Activated CD4-positive, alpha-beta memory T cell treated with anti-CD3 and anti-CD28 coated beads for 36 hours (primary cell): ENCODE measurements at regions of chr6 and their contacts with region 1.

Region 1: DNA sequence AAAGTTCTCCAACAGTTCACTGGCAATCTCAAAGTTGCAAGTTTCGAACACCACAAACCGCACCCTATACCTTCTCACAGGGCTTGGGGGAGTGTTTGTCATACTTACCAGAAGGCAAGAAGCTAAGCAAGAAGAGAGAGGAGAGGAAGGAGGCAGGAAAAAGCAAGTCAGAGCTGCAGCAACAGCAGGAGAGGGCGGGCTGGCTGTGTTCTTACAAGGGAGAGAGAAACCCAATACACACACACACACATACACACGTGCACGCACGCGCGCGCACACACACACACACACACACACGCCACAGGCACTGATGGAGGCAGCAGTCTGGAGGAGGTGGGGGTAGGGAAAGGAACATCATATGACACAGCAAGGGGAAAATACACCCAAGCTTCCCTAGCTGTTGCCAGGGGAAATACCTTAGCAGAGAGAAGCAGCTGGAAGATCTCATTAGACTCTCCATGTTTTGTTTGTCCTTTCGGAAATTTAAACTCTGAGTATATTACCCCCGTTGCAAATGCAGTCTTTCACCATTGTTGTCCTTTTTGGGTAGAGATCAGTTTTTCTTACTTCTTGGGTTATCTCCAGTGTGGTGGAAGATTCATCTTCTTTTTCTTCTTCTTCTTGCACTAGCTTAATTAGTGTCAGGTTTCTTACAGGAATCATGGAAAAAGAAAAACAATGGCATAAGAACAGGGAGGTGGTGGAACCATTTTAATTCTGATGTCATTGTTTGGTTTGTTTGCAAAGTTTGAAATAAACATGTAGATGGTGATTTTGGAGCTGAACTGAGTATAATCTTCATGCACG is at the start of gene TXLNB:
- DNase-seq: peak; percentile 92
- H3K4me3 Mint-ChIP-seq: peak within 1 kb of the TSS; percentile 72
- H3K27ac Mint-ChIP-seq: peak within 1 kb of the TSS; percentile 95
- H3K4me1 Mint-ChIP-seq: peaks cover 56% of the 10 kb centered on the region
- H3K27me3 Mint-ChIP-seq: no peaks in the 10 kb centered on the region
- total RNA-seq, gene TXLNB: 0.17 to 0.31 TPM

Region 2: DNA sequence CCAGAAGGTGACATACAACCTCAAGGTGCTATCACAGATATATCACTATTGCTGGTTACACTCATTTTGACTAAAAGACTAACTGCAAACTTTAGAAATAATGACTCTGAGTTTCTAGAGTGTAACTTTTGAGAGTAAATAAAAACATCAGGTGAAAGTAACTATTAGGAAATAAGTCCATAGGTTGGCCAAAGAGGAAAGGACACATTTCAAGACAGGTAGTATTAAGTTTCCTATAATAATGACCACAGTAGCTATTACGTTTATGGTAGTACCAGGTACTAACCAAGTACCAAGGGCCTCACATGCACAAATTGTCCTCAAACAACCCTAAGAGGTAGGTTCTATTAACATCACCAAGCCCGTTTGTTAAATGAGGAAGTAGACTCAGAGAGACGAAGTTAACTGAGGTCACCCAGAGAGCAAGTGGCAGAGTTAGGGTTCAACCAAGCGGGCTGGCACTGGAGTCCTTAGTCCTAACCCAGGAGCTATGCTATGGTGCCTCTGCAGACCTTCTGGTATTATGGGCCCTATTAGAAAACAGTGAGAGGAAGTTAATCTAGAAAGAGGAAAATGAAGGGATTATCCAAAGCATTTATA is 851.2 kb before region 1 on chr6:
- CTCF ChIA-PET with region 1: no interaction called
- POLR2A ChIA-PET with region 1: no interaction called
- intact Hi-C with region 1: no loop called
- DNase-seq: no peak
- H3K4me3 Mint-ChIP-seq: no peak overlapping the region
- H3K27ac Mint-ChIP-seq: no peak overlapping the region
- H3K4me1 Mint-ChIP-seq: no peaks in the 10 kb centered on the region
- H3K27me3 Mint-ChIP-seq: no peaks in the 10 kb centered on the region

Region 3: DNA sequence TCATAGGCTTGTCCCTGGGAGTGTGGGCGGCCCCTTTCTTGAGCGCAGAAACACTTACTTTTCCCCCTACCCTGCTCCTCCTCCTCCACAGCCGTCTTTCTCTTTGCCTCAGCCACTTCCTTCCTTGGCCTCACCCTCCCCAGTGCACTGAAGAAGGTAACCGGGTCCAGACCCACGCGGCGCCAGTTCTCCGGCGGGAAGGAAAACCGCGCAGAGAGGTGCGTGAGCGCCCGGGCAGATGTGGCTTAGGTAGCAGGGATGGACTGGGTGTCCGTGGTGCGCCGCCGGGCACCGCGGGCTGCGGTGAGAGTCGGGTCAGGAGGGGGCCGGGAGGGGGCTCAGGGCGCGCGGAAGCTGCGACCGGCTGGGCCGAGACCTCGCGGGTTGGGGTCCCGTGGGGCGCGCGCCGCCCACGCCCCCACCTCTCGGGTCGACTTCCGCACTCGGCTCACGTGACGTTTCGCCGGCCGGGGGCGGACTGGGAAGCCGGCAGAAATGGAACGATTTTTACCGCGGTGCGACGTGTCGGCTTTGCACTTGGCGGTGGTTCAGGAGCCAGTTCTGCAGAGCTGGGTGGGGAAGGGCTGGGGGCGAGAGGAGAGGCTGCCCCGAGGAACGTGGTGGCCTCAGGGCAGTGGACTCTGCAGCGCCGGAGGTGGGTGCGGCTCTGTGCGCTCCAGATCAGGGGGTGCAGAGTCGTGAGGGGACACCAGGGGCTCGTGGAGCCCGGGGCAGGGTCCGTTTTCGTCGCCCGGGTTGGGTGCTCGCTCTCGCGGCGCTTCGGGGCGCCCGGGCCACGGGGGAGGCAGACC is 263.2 kb before region 1 on chr6 and contains the start of gene ABRACL:
- CTCF ChIA-PET with region 1: interaction called, 3 read pairs
- POLR2A ChIA-PET with region 1: interaction called, 3 read pairs
- intact Hi-C with region 1: loop called (anchors 2 kb)
- DNase-seq: peak; percentile 91
- H3K4me3 Mint-ChIP-seq: no peak within 1 kb of the TSS
- H3K27ac Mint-ChIP-seq: no peak within 1 kb of the TSS
- H3K4me1 Mint-ChIP-seq: peaks cover 20% of the 10 kb centered on the region
- H3K27me3 Mint-ChIP-seq: no peaks in the 10 kb centered on the region
- total RNA-seq, gene ABRACL: 179 to 182 TPM

Region 4: DNA sequence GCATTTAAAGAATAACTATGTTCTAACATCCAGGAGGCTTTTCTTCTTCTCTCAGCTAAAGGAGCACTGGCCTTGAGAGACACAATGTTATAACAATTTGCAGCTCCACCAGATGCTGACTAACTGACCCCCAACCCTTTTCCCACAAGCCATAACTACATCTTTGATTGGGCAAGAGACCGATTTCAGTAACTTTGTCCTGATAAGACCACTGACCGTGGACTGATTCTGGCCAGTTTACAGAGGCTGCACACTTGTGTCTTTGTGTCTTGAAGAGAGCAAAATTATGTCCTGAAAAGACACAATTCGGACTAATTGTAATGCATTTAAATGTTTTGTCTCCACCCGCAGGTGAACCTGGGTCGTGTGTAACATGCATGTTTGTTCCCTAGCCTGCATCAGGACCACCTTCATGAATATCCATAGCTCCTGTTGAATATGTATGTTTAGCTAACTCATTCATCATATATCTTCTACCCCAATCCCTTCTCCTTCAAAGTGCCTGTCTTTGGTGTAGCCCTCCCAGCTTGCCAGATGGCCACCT is 241.2 kb before region 1 on chr6:
- CTCF ChIA-PET with region 1: no interaction called
- POLR2A ChIA-PET with region 1: no interaction called
- intact Hi-C with region 1: no loop called
- DNase-seq: no peak
- H3K4me3 Mint-ChIP-seq: no peak overlapping the region
- H3K27ac Mint-ChIP-seq: no peak overlapping the region
- H3K4me1 Mint-ChIP-seq: peaks cover 4% of the 10 kb centered on the region
- H3K27me3 Mint-ChIP-seq: no peaks in the 10 kb centered on the region

Region 5: GRCh38 chr6:139161817-139162284 is 130.2 kb before region 1 on chr6:
- CTCF ChIA-PET with region 1: no interaction called
- POLR2A ChIA-PET with region 1: no interaction called
- intact Hi-C with region 1: loop called (anchors 1 kb)
- DNase-seq: peak; percentile 88
- H3K4me3 Mint-ChIP-seq: peak overlapping the region; percentile 61
- H3K27ac Mint-ChIP-seq: peak overlapping the region; percentile 96
- H3K4me1 Mint-ChIP-seq: peaks cover 92% of the 10 kb centered on the region
- H3K27me3 Mint-ChIP-seq: no peaks in the 10 kb centered on the region

Region 6: GRCh38 chr6:139250296-139251044 is 41.5 kb before region 1 on chr6:
- CTCF ChIA-PET with region 1: interaction called, 6 read pairs
- POLR2A ChIA-PET with region 1: interaction called, 3 read pairs
- intact Hi-C with region 1: loop called (anchors 1 kb)
- DNase-seq: peak; percentile 75
- H3K4me3 Mint-ChIP-seq: no peak overlapping the region
- H3K27ac Mint-ChIP-seq: peak overlapping the region; percentile 73
- H3K4me1 Mint-ChIP-seq: peaks cover 49% of the 10 kb centered on the region
- H3K27me3 Mint-ChIP-seq: no peaks in the 10 kb centered on the region

Region 7: GRCh38 chr6:139278190-139278589 is 13.8 kb before region 1 on chr6:
- CTCF ChIA-PET with region 1: no interaction called
- POLR2A ChIA-PET with region 1: interaction called, 6 read pairs
- intact Hi-C with region 1: loop called (anchors 1 kb)
- DNase-seq: no peak
- H3K4me3 Mint-ChIP-seq: no peak overlapping the region
- H3K27ac Mint-ChIP-seq: no peak overlapping the region
- H3K4me1 Mint-ChIP-seq: peaks cover 29% of the 10 kb centered on the region
- H3K27me3 Mint-ChIP-seq: no peaks in the 10 kb centered on the region

Region 8: DNA sequence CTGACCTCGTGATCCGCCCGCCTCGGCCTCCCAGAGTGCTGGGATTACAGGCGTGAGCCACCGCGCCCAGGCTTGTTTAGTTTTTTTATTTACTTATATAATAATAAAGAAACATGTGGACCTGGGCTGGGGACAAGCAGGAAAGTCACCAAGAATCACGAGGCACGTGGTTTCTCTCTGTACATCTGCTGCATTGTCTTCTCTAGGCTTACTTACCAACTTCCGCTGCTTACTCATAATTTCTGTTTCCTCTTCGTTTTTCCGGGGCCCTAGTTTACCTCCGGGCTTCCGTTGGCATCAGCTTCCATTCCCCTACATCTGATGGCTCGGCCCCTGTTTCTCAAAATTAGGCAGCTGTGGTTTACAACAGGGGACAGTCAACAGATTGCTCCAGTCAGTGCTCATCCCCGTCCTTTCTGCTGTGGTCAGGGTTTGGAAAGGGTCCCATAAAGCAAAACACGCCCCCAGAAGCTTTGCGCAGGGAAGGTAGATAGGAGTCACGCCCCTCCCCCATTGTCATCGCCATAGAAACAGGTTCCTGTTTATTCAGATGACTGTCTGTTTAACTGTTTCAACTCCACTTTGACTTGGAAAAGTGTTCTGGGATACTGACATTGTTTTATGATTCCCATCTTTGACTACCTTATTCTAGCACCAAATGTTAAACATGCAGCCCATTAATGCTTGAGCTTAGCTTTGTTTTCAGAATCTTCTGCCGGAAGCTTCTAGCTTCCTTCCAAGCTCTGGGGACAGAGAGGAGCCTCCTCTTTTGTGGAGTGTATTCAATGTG is 31.7 kb after region 1 on chr6:
- CTCF ChIA-PET with region 1: interaction called, 3 read pairs
- POLR2A ChIA-PET with region 1: interaction called, 9 read pairs
- intact Hi-C with region 1: loop called (anchors 1 kb)
- DNase-seq: peak; percentile 84
- H3K4me3 Mint-ChIP-seq: peak overlapping the region; percentile 67
- H3K27ac Mint-ChIP-seq: peak overlapping the region; percentile 94
- H3K4me1 Mint-ChIP-seq: peaks cover 23% of the 10 kb centered on the region
- H3K27me3 Mint-ChIP-seq: no peaks in the 10 kb centered on the region

Region 9: DNA sequence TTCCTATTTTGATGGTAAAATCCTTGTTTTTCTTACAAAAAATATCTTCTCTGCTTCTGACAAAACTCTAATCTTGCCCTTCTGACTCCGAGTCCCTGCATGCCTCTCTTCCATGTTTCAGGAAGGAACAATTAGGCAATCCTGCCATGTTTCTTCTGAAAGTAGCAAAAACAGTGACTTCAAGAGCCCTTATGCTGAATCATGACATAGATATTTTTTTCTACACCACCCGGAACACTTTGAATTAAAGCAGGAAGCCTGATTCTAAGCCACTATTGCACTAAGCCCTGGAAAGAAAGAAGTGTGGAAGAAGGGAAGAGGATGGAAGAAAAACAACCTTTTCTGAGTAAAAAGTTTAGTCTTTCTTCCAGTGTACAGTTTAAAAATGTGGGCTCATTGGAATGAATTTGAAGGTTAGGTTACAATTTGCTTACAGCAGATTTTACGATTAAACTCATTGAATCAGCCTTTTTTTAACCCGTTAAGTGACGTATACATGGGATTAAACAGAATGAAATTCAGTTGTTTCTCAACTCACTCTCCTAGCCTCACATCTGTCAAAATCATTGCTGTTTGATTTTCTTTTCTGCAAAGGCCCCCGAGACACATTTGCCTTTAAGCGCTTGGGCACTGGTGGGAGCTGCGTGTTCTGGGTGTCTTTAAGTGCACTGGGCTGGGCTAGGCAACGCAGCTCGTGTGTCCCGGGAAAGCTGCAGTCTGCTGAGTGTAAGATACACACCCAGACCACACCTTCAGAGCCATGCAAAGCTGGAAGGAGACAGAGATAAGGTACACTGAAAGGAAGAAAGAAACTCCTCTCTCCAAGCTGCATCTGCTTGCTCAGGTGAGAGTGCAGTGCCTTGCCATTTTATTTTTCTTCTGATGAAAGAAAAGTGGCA is 241.8 kb after region 1 on chr6:
- CTCF ChIA-PET with region 1: interaction called, 3 read pairs
- POLR2A ChIA-PET with region 1: no interaction called
- intact Hi-C with region 1: loop called (anchors 5 kb)
- DNase-seq: no peak
- H3K4me3 Mint-ChIP-seq: peak overlapping the region; percentile 55
- H3K27ac Mint-ChIP-seq: peak overlapping the region; percentile 85
- H3K4me1 Mint-ChIP-seq: peaks cover 57% of the 10 kb centered on the region
- H3K27me3 Mint-ChIP-seq: no peaks in the 10 kb centered on the region

Region 10: DNA sequence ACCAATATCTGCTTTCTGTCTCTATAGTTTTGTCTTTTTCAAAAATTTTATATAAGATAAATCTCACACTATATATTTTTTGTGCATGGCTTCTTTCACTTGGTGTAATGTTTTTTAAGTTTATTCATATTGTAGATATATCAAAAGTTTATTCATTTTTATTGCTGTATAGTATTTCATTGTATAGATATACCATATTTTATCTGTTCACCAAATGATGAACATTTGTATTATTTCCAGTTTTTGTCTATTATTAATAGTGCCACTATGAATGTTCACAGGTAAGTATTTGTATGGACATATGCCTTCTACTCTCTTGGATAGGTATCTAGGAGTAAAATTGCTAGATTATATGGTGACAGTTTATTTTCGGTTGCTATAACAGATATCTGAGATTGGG is 372.0 kb after region 1 on chr6:
- CTCF ChIA-PET with region 1: no interaction called
- POLR2A ChIA-PET with region 1: no interaction called
- intact Hi-C with region 1: no loop called
- DNase-seq: no peak
- H3K4me3 Mint-ChIP-seq: no peak overlapping the region
- H3K27ac Mint-ChIP-seq: no peak overlapping the region
- H3K4me1 Mint-ChIP-seq: no peaks in the 10 kb centered on the region
- H3K27me3 Mint-ChIP-seq: no peaks in the 10 kb centered on the region

Region 11: DNA sequence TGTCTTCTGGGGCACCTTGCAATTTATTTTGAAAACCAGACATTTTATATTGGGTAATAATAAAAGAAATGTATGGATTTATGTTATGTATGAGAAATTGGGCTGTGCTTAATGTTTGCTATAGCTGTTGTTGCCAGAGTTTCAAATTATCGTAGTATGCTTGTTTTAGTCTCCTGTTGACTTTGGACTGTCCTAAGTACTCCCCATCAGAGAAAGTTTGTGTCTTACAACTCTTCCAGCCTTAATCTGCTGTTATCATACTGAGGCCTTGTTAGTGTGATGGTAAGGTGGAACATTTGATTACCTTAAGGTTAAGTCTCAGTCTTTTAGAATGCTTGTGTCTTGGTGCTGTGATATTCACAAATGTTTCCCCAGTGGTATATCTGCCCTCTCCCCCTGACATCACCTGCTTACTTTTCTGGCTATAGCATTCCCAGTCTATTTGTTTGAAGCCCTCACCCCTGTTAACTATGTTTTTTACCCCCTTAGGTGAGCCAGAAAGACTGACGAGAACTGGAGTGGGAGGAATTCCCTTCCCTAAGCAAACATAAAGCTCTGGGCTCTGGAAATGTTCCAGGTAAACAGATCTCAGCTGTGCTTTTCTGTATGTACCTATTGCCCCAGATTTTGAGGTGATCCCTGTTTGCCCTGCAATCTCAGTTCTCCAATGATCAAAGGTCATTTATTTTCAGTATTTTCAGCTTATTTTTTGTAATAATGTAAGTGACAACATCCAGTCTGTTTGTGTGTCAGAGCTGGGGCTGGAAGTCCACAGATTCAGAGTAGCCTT is 663.5 kb after region 1 on chr6:
- CTCF ChIA-PET with region 1: no interaction called
- POLR2A ChIA-PET with region 1: no interaction called
- intact Hi-C with region 1: no loop called
- DNase-seq: no peak
- H3K4me3 Mint-ChIP-seq: no peak overlapping the region
- H3K27ac Mint-ChIP-seq: no peak overlapping the region
- H3K4me1 Mint-ChIP-seq: no peaks in the 10 kb centered on the region
- H3K27me3 Mint-ChIP-seq: peaks cover 4% of the 10 kb centered on the region